AG04450 (cell line): ENCODE measurements at regions of chr12 and their contacts with region 1.

Region 1: GRCh38 chr12:15899282-15899870 is 11.8 kb upstream of the DERA start:
- DNase-seq: no peak
- H3K4me3 ChIP-seq: no peak overlapping the region
- H3K27ac ChIP-seq: no peak overlapping the region
- H3K27me3 ChIP-seq: no peaks in the 10 kb centered on the region
- CTCF ChIP-seq: peak; percentile 70

Region 2: DNA sequence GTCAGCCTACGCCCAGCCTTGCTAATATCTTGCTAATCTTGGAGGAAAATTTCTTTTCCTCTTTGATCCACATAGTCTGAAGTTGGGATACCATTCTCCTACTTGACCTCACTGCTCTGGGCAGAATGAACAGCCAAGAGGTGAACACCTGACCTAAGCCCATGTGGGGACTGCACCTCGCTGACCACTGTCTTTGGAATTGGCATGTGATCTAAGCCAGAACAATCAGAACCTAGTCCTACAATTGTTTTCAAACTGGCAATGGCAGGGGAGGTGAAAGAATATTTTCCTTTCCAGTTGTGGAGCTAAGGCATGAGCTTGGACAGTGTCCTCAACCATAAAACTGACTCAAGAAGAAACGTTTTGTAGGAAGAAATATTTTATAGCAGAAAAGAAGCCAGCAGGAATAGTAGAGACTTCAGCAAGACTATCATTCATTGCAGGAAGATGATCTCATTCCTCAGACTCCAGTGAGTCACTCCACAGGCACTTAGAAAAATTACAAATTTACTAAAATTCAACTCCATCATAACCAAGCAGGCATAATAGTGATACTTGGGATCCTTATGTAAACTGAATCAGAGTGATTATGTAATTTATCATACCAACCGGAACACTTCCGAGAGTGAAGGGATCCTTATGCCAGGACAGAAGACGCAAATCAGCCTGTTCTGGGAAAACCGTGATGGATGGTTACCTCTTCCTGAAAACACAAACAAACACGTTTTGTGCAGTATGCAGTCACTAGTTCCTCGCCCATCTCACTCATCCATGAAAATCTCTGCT is 562.4 kb before region 1 on chr12:
- CTCF ChIA-PET with region 1: no interaction called
- POLR2A ChIA-PET with region 1: no interaction called
- DNase-seq: no peak
- H3K4me3 ChIP-seq: no peak overlapping the region
- H3K27ac ChIP-seq: no peak overlapping the region
- H3K27me3 ChIP-seq: no peaks in the 10 kb centered on the region
- CTCF ChIP-seq: no peak

Region 3: DNA sequence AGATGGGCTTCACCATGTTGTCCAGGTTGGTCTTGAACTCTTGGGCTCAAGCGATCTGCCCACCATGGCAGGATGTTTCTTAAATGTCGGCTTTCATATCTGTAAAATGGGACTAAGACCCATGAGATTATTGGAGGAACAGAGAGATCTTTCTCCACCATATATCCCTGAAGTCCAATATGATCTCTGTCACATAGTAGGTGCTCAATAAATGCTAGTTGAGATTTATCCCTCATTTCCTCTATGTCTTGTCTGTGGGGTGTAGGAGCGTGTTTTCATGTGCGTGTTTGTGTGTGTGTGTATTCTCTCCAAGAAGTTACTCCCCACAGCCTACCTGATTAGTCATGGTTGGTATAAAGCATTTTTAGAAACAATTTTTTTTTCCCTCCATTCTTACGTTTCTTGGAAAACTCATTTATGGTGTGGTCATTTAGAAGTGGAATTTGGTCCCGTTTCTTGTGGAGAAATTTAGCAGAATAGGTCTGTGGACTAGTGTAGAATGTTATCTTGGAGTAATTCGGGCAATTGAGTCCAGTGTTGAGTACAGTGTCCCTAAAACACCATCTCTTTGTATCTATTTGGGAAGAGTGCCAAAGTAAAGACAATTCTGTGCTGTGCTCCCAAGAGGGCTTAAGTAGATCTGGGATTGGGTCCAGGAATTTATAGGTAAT is 12.9 kb before region 1 on chr12:
- CTCF ChIA-PET with region 1: interaction called, 51 read pairs
- POLR2A ChIA-PET with region 1: no interaction called
- DNase-seq: no peak
- H3K4me3 ChIP-seq: no peak overlapping the region
- H3K27ac ChIP-seq: no peak overlapping the region
- H3K27me3 ChIP-seq: no peaks in the 10 kb centered on the region
- CTCF ChIP-seq: no peak

Region 4: GRCh38 chr12:15910864-15911721 is 11.7 kb after region 1 on chr12 and contains the start of gene DERA:
- CTCF ChIA-PET with region 1: interaction called, 49 read pairs
- POLR2A ChIA-PET with region 1: interaction called, 12 read pairs
- DNase-seq: no peak
- H3K4me3 ChIP-seq: peak within 1 kb of the TSS; percentile 72
- H3K27ac ChIP-seq: peak within 1 kb of the TSS; percentile 84
- H3K27me3 ChIP-seq: no peaks in the 10 kb centered on the region
- CTCF ChIP-seq: no peak
- polyA plus RNA-seq, gene DERA: 32.5 and 44.3 TPM in 2 replicates

Region 5: DNA sequence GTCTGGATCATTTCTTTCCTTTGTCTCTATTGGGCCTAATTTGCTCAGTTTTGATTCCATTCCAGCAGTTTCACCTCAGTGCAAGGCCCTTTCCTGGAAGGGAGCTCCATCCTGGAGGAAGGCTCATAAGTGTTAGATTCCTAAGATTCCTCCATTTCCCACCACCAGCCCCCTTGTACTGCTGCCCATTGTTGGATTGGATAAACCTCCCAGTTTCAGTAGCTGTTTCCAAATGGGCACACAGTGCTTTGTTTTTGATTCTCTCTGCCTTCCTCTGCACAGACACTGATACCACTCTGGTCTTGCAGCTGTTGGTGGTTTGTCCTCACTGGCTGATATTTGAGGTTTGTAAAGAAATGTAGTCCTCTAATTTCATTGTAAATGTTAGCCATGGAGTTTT is 219.2 kb after region 1 on chr12:
- CTCF ChIA-PET with region 1: no interaction called
- POLR2A ChIA-PET with region 1: no interaction called
- DNase-seq: no peak
- H3K4me3 ChIP-seq: no peak overlapping the region
- H3K27ac ChIP-seq: no peak overlapping the region
- H3K27me3 ChIP-seq: no peaks in the 10 kb centered on the region
- CTCF ChIP-seq: no peak